WTC11 (cell line): ENCODE measurements at regions of chr12 and their contacts with region 1.

Region 1: GRCh38 chr12:120649442-120650232 is 9.2 kb downstream of the CABP1 start:
- DNase-seq: peak; percentile 28
- ATAC-seq: peak; percentile 11
- H3K4me3 Mint-ChIP-seq: peak overlapping the region; percentile 69
- H3K27ac Mint-ChIP-seq: peak overlapping the region; percentile 64; the same call in 1 of the 2 replicates
- H3K4me1 Mint-ChIP-seq: peaks cover 43% of the 10 kb centered on the region
- H3K27me3 Mint-ChIP-seq: no peaks in the 10 kb centered on the region; the same call in 1 of the 2 replicates
- CTCF ChIP-seq: no peak; the same call in 1 of the 2 replicates

Region 2: DNA sequence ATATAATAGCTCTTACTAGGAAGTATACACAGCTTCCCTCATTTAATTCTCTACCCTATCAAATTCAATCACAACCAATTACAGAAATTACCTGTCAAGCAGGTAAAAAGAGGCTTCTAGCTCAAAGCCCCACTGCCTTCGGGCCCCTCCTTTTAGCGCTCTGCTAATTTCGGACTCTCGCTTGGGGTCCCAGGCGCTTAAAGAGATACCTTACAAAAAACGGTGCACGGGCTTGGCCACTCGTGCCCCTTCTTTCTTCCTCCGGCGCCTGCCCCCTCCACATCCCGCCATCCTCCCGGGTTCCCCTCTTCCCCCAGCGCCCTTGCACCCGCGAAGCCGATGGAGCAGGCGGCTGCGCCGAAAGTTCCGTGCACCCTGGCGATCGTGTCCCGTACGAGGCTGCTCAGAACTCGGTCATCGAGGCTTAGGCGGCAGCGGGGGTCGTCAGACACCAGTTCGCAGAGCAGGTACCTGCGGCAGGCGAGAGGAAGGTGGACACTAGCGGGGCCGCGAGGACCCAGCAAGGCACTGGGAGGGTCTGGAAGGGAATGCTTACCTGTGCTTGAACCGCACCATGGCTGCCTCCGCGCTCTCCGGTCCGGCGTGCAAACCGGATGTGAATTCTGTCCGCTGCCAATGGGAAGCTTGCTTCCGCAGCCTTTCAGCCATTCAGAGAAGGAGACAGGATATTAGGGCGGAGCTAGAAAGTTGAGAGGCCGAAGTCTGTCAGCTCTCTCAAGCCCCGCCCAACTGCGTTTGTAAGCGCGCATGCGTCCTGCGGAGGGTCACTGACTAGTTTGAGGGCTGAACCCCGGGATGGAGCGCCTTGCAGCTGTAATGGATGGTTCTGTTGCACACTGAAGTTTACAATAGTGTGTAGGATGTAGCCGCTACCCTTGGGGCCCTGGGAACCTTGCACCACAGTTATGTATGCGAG is 68.6 kb before region 1 on chr12 and contains the start of gene POP5:
- CTCF ChIA-PET with region 1: interaction called, 115 read pairs
- POLR2A ChIA-PET with region 1: interaction called, 3 read pairs
- DNase-seq: peak; percentile 98
- ATAC-seq: peak; percentile 91
- H3K4me3 Mint-ChIP-seq: peak within 1 kb of the TSS; percentile 100
- H3K27ac Mint-ChIP-seq: peak within 1 kb of the TSS; percentile 95
- H3K4me1 Mint-ChIP-seq: peaks cover 24% of the 10 kb centered on the region
- H3K27me3 Mint-ChIP-seq: peaks cover 12% of the 10 kb centered on the region
- CTCF ChIP-seq: no peak
- total RNA-seq, gene POP5: 53.9 to 57.7 TPM (median 54.7 TPM) in 3 replicates

Region 3: GRCh38 chr12:120599672-120600552 is 49.7 kb before region 1 on chr12:
- CTCF ChIA-PET with region 1: interaction called, 25 read pairs
- POLR2A ChIA-PET with region 1: no interaction called
- DNase-seq: peak; percentile 51
- ATAC-seq: peak; percentile 87
- H3K4me3 Mint-ChIP-seq: no peak overlapping the region
- H3K27ac Mint-ChIP-seq: no peak overlapping the region
- H3K4me1 Mint-ChIP-seq: peaks cover 21% of the 10 kb centered on the region
- H3K27me3 Mint-ChIP-seq: no peaks in the 10 kb centered on the region
- CTCF ChIP-seq: no peak

Region 4: GRCh38 chr12:120662879-120663278 is 13.2 kb after region 1 on chr12:
- CTCF ChIA-PET with region 1: interaction called, 78 read pairs
- POLR2A ChIA-PET with region 1: no interaction called
- DNase-seq: no peak
- ATAC-seq: no peak
- H3K4me3 Mint-ChIP-seq: no peak overlapping the region
- H3K27ac Mint-ChIP-seq: no peak overlapping the region
- H3K4me1 Mint-ChIP-seq: peaks cover 10% of the 10 kb centered on the region
- H3K27me3 Mint-ChIP-seq: no peaks in the 10 kb centered on the region
- CTCF ChIP-seq: no peak

Region 5: DNA sequence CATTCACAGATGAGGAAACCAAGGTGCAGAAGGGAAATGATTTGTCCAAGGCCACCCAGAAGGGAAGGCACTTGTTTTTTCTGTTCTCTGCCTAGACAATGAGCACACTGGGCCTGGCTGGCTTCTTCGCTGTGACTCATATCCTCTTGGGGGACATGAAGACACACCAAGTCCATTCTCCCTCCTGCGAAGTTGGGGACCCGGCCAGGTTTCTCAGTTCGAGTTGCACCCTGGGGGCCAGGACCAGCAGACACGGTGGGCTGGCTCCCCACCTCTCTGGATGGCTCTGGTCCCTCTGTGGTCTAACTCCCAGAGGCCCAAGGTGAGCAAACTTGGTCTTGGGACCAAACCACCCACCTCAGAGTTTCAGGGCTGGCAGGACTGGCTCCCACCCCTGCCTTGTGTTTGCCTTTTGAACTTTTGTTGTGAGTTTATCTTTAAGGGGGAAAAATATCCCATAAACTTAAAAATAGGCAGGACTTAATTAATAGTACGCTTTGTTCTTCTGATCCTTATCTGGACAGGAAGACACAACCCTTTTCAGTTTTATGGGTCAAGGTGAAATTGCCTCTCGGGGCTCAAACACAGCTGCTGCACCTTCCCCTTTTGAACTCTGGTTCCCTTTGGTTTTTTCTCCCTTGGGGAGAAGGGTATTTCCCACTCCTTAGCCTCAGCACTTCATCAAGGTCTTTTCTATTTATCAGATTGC is 28.3 kb after region 1 on chr12:
- CTCF ChIA-PET with region 1: interaction called, 34 read pairs
- POLR2A ChIA-PET with region 1: no interaction called
- DNase-seq: no peak
- ATAC-seq: no peak
- H3K4me3 Mint-ChIP-seq: no peak overlapping the region
- H3K27ac Mint-ChIP-seq: no peak overlapping the region
- H3K4me1 Mint-ChIP-seq: peaks cover 9% of the 10 kb centered on the region
- H3K27me3 Mint-ChIP-seq: no peaks in the 10 kb centered on the region
- CTCF ChIP-seq: no peak

Region 6: GRCh38 chr12:120710031-120710804 is 60.6 kb after region 1 on chr12 and contains the start of gene UNC119B:
- CTCF ChIA-PET with region 1: interaction called, 48 read pairs
- POLR2A ChIA-PET with region 1: no interaction called
- DNase-seq: peak; percentile 72
- ATAC-seq: peak; percentile 89
- H3K4me3 Mint-ChIP-seq: peak within 1 kb of the TSS; percentile 79
- H3K27ac Mint-ChIP-seq: peak within 1 kb of the TSS; percentile 64
- H3K4me1 Mint-ChIP-seq: peaks cover 26% of the 10 kb centered on the region
- H3K27me3 Mint-ChIP-seq: no peaks in the 10 kb centered on the region
- CTCF ChIP-seq: no peak
- total RNA-seq, gene UNC119B: 49.9 to 53.3 TPM (median 50.3 TPM) in 3 replicates

Region 7: DNA sequence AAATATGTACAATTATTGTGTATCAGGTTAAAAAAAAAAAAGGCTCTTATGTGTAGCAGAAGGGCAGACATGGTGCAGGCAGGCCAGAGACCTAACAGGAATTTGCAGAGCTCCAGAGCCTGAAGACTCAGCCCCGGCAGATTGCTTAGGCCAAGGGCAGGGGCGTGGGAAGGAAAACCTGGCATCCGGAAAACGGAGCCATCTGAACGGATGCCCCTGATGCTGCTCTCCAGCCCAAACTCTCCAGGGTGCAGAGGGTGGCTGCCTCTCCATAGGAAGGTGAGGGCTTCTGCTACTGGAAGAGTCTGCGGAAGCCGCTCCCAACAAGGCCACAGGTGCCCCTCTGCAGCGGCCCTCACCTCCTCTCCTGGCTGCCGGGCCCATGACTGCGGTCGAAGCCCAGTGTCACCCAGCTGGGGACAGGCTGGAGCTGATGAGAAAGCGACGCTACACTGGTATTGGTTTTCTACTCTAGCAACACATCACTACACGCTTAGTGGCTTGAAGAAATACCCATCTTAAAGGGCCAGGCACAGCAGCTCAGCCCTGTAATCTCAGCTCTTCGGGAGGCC is 95.4 kb after region 1 on chr12:
- CTCF ChIA-PET with region 1: no interaction called
- POLR2A ChIA-PET with region 1: no interaction called
- DNase-seq: no peak
- ATAC-seq: no peak; the same call in 1 of the 2 replicates
- H3K4me3 Mint-ChIP-seq: no peak overlapping the region
- H3K27ac Mint-ChIP-seq: no peak overlapping the region
- H3K4me1 Mint-ChIP-seq: no peaks in the 10 kb centered on the region
- H3K27me3 Mint-ChIP-seq: no peaks in the 10 kb centered on the region
- CTCF ChIP-seq: no peak

Region 8: DNA sequence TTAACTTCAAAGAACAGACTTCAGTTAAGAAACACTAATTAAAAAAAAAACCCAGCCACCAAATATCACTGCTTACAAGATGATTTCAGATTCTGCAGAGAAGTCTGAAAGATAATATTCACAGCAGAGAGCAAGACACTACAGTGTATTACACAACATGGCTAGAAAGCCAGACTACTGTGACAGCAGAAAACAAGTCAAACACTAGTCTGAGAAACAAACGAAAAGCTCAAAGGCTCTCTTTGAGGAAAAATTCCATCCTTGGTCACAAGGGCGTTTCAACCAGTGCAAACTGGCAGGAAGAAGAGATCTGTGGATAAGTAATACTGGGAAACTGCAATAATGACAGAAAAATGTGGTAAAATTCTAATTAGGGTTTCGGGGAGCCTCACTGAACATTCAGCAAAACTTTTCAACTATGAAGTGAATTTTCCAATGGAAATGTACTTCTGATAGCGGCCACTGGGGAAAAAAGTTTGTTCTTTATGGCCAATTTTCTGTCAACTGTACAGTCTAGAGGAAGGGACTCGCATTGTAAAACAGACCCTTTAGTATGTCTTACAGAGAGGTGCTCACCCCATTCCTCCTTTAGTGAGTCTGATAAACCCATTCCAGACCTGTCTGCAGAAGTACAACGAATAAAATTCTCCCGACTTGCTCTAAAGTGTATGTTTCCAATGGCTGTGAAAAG is 126.4 kb after region 1 on chr12:
- CTCF ChIA-PET with region 1: no interaction called
- POLR2A ChIA-PET with region 1: no interaction called
- DNase-seq: no peak
- ATAC-seq: no peak
- H3K4me3 Mint-ChIP-seq: no peak overlapping the region
- H3K27ac Mint-ChIP-seq: peak overlapping the region; percentile 39; the same call in 1 of the 2 replicates
- H3K4me1 Mint-ChIP-seq: peaks cover 12% of the 10 kb centered on the region
- H3K27me3 Mint-ChIP-seq: no peaks in the 10 kb centered on the region
- CTCF ChIP-seq: no peak